ENCODE measurements at regions of chr17 and their contacts with region 1.

Region 1: GRCh38 chr17:46002311-46002972 is 3.4 kb downstream of the STH start:
- DNase-seq: peak in 4 of 5 donors; percentile 78 to 84 (median 82)
- H3K4me3 ChIP-seq: no peak overlapping the region
- H3K27ac ChIP-seq: no peak overlapping the region
- H3K4me1 ChIP-seq: peaks cover 0 to 3% (median 0%) of the 10 kb centered on the region in 3 donors
- H3K27me3 ChIP-seq: no peaks in the 10 kb centered on the region
- CTCF ChIP-seq: peak; percentile 96

Region 2: GRCh38 chr17:46202424-46202823 is 200.0 kb after region 1 on chr17:
- intact Hi-C with region 1: loop called (anchors 10 kb)
- DNase-seq: no peak
- H3K4me3 ChIP-seq: no peak overlapping the region
- H3K27ac ChIP-seq: no peak overlapping the region
- H3K4me1 ChIP-seq: peaks cover 0 to 22% (median 3%) of the 10 kb centered on the region in 3 donors
- H3K27me3 ChIP-seq: no peaks in the 10 kb centered on the region
- CTCF ChIP-seq: no peak

Measured in kidney (tissue), 22 donors.